HepG2 (cell line): ENCODE measurements at regions of chr4 and their contacts with region 1.

Region 1: GRCh38 chr4:163494360-163495162 is at the start of gene TMA16:
- DNase-seq: peak; percentile 92
- ATAC-seq: peak; percentile 97
- H3K4me3 ChIP-seq: peak within 1 kb of the TSS; percentile 63 to 98 (median 94)
- H3K27ac ChIP-seq: peak within 1 kb of the TSS; percentile 99
- H3K4me1 ChIP-seq: peaks cover 22% of the 10 kb centered on the region
- H3K27me3 ChIP-seq: peaks cover 0 to 4% of the 10 kb centered on the region in 2 experiments; a peak in 1 of 5 replicates
- CTCF ChIP-seq: peak; percentile 35
- EP300 ChIP-seq: peak in 1 of 2 experiments; percentile 64; a peak in 2 of 4 replicates
- POLR2A ChIP-seq: peak; percentile 82 to 90
- RAD21 ChIP-seq: peak; percentile 23; the same call in 1 of the 2 replicates
- total RNA-seq, gene TMA16: 52.5 and 69.0 TPM in 2 replicates

Region 2: GRCh38 chr4:163166041-163166579 is 328.5 kb before region 1 on chr4:
- CTCF ChIA-PET with region 1: no interaction called
- POLR2A ChIA-PET with region 1: no interaction called
- in situ Hi-C with region 1: no loop called
- intact Hi-C with region 1: loop called (anchors 1 kb)
- DNase-seq: peak; percentile 26
- ATAC-seq: peak; percentile 92
- H3K4me3 ChIP-seq: peak overlapping the region; percentile 76 to 83 (median 82)
- H3K27ac ChIP-seq: peak overlapping the region; percentile 80
- H3K4me1 ChIP-seq: peaks cover 32% of the 10 kb centered on the region
- H3K27me3 ChIP-seq: no peaks in the 10 kb centered on the region; a peak in 1 of 5 replicates
- CTCF ChIP-seq: no peak
- EP300 ChIP-seq: no peak
- POLR2A ChIP-seq: no peak
- RAD21 ChIP-seq: no peak